ENCODE measurements at regions of chr4 and their contacts with region 1.

Region 1: GRCh38 chr4:165844161-165844560 is 28.9 kb upstream of the TLL1 start:
- DNase-seq: peak; percentile 47
- H3K4me3 ChIP-seq: no peak overlapping the region
- H3K27ac ChIP-seq: no peak overlapping the region
- H3K4me1 ChIP-seq: peaks cover 13% of the 10 kb centered on the region
- H3K27me3 ChIP-seq: no peaks in the 10 kb centered on the region
- CTCF ChIP-seq: no peak
- POLR2A ChIP-seq: no peak

Region 2: DNA sequence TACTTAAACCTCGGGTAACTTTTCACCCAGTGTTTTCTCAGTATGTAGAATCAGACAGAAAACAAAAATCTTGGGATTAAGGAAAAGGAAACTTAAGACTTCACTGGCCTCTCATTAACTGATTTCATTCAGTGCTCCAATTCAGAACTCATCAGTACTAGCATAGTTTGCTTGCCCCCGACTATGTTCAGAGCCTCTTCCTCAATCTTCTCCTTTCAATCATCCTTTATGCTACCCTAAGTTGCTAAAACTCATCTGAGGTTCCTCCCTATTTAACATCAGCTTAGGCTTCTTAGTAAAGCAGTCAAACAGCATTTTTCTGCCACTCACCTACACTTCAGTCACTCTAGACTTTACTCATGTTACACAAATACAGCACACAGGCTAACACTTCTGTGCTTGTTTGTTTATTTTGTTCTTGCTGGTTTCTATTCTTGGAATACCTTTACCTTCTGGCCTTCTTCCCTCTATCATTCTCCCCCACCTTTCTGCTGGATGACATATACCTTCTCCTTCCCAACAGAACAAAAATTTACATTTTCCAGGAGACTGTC is 134.1 kb before region 1 on chr4:
- CTCF ChIA-PET with region 1: no interaction called
- POLR2A ChIA-PET with region 1: no interaction called
- dilution Hi-C with region 1: no loop called
- intact Hi-C with region 1: no loop called
- DNase-seq: no peak
- H3K4me3 ChIP-seq: no peak overlapping the region
- H3K27ac ChIP-seq: no peak overlapping the region
- H3K4me1 ChIP-seq: peaks cover 4% of the 10 kb centered on the region
- H3K27me3 ChIP-seq: no peaks in the 10 kb centered on the region
- CTCF ChIP-seq: no peak
- POLR2A ChIP-seq: no peak

Region 3: DNA sequence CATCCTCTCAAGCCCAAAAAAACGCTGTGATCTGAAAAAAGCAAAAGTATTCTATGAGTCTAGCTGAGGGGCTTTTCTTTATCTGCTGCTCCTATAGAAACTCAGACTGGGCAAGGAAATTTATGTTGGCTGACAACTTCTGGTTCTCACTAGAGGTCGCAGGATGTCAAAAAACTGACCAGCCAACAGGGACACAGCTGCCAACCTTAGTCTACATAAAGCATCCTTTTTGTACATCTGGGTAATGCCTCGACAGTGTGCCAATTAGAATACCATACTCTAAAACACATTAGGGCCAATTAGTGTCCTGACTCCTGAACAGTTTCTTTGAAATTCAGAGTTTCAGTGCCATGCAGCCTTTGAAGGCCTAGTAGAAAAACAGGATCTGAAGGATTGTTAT is 20.1 kb after region 1 on chr4:
- CTCF ChIA-PET with region 1: no interaction called
- POLR2A ChIA-PET with region 1: no interaction called
- dilution Hi-C with region 1: no loop called
- intact Hi-C with region 1: loop called (anchors 2 kb)
- DNase-seq: peak; percentile 36
- H3K4me3 ChIP-seq: no peak overlapping the region
- H3K27ac ChIP-seq: no peak overlapping the region
- H3K4me1 ChIP-seq: no peaks in the 10 kb centered on the region
- H3K27me3 ChIP-seq: no peaks in the 10 kb centered on the region
- CTCF ChIP-seq: peak in 1 of 2 donors; percentile 1
- POLR2A ChIP-seq: no peak

Measured in endothelial cell of umbilical vein (primary cell).